ENCODE measurements at regions of chr4 and their contacts with region 1.

Region 1: DNA sequence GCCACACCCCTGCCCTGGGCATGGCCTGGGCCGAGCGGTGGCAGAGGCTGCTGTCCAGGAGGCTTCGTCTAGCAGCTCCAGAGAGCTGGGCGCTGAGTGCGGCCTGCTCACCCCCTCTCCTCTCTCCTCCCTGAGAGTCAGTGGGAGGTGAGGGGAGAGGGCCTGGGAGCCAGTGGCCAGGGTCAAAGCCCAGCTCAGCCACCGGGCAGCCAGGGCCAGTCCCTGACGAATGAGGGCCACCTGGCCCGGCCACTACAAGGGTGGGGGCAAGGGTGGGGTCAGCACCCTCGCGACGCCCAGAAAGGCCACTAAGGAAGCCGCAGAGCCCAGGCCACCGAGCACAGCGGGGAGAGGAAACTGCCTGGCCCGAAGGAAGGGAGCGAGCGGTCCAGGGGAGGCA is 131.7 kb downstream of the FAM53A start:
- DNase-seq: no peak
- H3K4me3 ChIP-seq: no peak overlapping the region
- H3K4me3 Mint-ChIP-seq: no peak overlapping the region
- H3K27ac Mint-ChIP-seq: no peak overlapping the region
- H3K4me1 ChIP-seq: no peaks in the 10 kb centered on the region
- H3K4me1 Mint-ChIP-seq: no peaks in the 10 kb centered on the region
- H3K27me3 ChIP-seq: no peaks in the 10 kb centered on the region
- H3K27me3 Mint-ChIP-seq: peaks cover 8% of the 10 kb centered on the region
- CTCF ChIP-seq: no peak

Region 2: DNA sequence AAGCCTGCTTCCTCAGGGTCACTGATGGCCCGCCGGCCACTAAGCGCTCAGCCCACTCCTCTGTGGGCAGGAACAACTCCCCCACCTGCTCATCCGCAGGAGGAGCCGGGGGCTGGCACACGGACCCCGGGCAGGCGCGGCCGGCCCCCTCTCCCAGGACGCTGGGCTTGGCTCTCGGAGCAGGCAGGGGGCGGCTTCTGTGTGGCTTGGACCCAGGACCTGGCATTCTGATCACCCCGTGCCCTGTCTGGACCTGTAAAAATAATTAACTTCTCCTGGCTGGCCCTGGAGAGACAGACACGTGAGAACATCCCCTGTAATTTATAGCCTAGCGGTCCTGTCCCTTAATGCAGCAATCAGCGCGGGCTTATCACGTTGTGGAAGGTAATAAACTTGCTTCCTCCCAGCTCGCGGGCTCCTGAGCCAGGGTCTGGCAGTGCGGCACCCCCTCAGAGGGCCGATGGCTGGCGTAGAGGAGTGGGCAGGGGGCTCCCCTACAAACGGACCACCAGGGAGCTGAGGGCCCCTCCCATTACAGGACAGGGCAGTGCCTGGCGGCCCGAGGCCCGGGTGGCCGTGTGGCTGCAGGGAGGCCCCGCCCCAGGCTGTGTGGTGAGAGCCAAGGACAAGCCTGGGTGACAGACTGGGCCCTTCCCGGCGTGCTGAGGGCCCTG is 61.7 kb before region 1 on chr4:
- CTCF ChIA-PET with region 1: no interaction called
- POLR2A ChIA-PET with region 1: interaction called, 11 read pairs
- intact Hi-C with region 1: no loop called
- DNase-seq: no peak
- H3K4me3 ChIP-seq: no peak overlapping the region
- H3K4me3 Mint-ChIP-seq: no peak overlapping the region
- H3K27ac Mint-ChIP-seq: no peak overlapping the region
- H3K4me1 ChIP-seq: no peaks in the 10 kb centered on the region
- H3K4me1 Mint-ChIP-seq: no peaks in the 10 kb centered on the region
- H3K27me3 ChIP-seq: 0 out of 2 replicates have a peak, but pooled peaks cover 2% of the 10 kb centered on the region
- H3K27me3 Mint-ChIP-seq: peaks cover 9% of the 10 kb centered on the region
- CTCF ChIP-seq: no peak

Region 3: GRCh38 chr4:1541449-1542225 is 10.8 kb before region 1 on chr4:
- CTCF ChIA-PET with region 1: no interaction called
- POLR2A ChIA-PET with region 1: no interaction called
- intact Hi-C with region 1: no loop called
- DNase-seq: no peak
- H3K4me3 ChIP-seq: no peak overlapping the region
- H3K4me3 Mint-ChIP-seq: no peak overlapping the region
- H3K27ac Mint-ChIP-seq: no peak overlapping the region
- H3K4me1 ChIP-seq: no peaks in the 10 kb centered on the region
- H3K4me1 Mint-ChIP-seq: no peaks in the 10 kb centered on the region
- H3K27me3 ChIP-seq: no peaks in the 10 kb centered on the region
- H3K27me3 Mint-ChIP-seq: no peaks in the 10 kb centered on the region
- CTCF ChIP-seq: no peak

Measured in Caco-2 (cell line).